ENCODE measurements at regions of chr14 and their contacts with region 1.

Region 1: GRCh38 chr14:40601063-40601462 is 1005.6 kb upstream of the LRFN5 start:
- DNase-seq: no peak
- ATAC-seq: no peak
- H3K4me3 ChIP-seq: no peak overlapping the region
- H3K27ac ChIP-seq: no peak overlapping the region
- H3K4me1 ChIP-seq: no peaks in the 10 kb centered on the region
- H3K27me3 ChIP-seq: 0 out of 2 replicates have a peak, but pooled peaks cover 7% of the 10 kb centered on the region
- CTCF ChIP-seq: no peak

Region 2: DNA sequence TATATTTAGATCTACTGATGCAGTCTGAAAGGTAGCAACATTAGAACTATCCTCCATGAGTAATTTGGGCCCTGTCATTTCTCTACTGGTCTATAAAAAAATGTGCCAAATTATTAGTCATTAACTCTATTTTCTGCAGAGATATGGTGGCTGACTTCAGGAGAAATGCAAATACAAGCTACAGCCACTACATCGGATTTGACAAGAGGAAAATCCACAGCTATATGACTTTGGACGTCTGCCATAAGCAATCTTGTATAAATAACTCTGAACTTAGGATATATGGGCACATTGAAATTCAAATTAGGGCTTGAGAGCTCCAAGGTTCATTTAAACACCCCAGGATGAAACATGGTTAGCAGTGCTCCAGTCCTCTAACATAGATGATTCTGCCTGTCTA is 22.6 kb after region 1 on chr14:
- CTCF ChIA-PET with region 1: no interaction called
- POLR2A ChIA-PET with region 1: interaction called, 20 read pairs
- intact Hi-C with region 1: no loop called
- DNase-seq: peak; percentile 21
- ATAC-seq: peak; percentile 89
- H3K4me3 ChIP-seq: no peak overlapping the region
- H3K27ac ChIP-seq: no peak overlapping the region
- H3K4me1 ChIP-seq: no peaks in the 10 kb centered on the region
- H3K27me3 ChIP-seq: no peaks in the 10 kb centered on the region
- CTCF ChIP-seq: no peak

Region 3: GRCh38 chr14:40656311-40656710 is 55.2 kb after region 1 on chr14:
- CTCF ChIA-PET with region 1: no interaction called
- POLR2A ChIA-PET with region 1: no interaction called
- intact Hi-C with region 1: no loop called
- DNase-seq: no peak
- ATAC-seq: no peak
- H3K4me3 ChIP-seq: no peak overlapping the region
- H3K27ac ChIP-seq: no peak overlapping the region
- H3K4me1 ChIP-seq: no peaks in the 10 kb centered on the region
- H3K27me3 ChIP-seq: no peaks in the 10 kb centered on the region
- CTCF ChIP-seq: no peak

Measured in PC-3 (cell line).